Activated CD4-positive, alpha-beta T cell treated with anti-CD3 and anti-CD28 coated beads for 36 hours (primary cell): ENCODE measurements at regions of chr6 and their contacts with region 1.

Region 1: DNA sequence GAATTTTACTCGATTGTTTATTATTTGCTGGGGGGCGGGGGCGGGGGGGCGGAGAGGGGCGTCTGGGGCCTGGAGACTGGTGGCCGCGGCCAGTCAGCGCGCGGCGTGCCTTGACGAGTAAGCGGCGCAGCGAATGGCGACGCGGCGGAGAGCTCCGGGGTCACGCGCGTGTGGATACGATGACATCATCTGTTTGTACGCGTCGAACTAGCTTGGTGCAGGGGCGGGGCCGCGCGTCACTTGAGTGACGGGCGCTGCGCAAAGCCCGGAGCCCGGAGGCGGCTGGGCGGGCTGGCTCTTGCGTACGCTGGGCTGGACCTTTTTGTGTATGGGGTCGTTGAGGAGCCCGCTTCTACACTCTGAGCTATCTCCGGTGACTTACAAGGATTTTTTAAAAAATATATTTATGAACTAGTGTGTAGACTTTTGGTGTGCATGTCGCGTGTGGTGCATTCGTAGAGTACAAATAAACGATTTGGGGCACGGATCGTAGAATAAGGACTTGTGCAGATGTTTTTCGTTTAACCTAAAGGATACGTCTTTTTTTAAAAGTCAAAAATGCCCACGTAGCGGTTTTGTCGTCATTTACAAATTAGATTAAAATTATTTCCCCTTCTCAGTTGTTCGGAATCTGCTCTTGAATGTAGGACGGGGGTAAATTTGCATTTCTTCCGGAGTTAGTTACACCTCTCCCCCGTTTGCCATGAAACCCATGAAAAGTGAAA is 2.2 kb upstream of the FOXO3 start:
- DNase-seq: peak; percentile 98
- ATAC-seq: peak; percentile 71
- H3K4me3 Mint-ChIP-seq: peak overlapping the region; percentile 83
- H3K27ac Mint-ChIP-seq: peak overlapping the region; percentile 89
- H3K4me1 Mint-ChIP-seq: peaks cover 21% of the 10 kb centered on the region
- H3K27me3 Mint-ChIP-seq: peaks cover 14% of the 10 kb centered on the region

Region 2: DNA sequence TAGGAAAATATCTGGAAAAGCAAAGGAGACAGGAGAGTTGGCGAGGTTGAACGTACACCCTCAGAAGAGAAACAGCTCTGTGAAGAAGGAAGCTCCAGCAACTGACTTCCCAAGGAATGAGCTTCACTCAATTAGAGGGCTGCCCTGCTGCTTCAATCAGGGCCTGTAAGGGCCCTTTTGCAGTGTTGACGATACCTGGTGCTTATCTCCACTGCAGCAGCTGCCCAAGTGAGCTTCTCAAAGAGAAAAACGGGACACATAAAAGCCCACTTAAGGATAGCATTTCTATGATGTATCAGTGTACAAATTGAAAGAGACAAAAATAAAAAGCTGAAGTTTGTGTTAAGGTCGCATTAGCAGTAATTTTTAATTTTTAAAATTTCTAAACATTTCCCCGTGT is 616.9 kb before region 1 on chr6:
- CTCF ChIA-PET with region 1: no interaction called
- POLR2A ChIA-PET with region 1: no interaction called
- intact Hi-C with region 1: no loop called
- DNase-seq: no peak
- ATAC-seq: no peak
- H3K4me3 Mint-ChIP-seq: no peak overlapping the region
- H3K27ac Mint-ChIP-seq: no peak overlapping the region
- H3K4me1 Mint-ChIP-seq: peaks cover 37% of the 10 kb centered on the region
- H3K27me3 Mint-ChIP-seq: no peaks in the 10 kb centered on the region

Region 3: DNA sequence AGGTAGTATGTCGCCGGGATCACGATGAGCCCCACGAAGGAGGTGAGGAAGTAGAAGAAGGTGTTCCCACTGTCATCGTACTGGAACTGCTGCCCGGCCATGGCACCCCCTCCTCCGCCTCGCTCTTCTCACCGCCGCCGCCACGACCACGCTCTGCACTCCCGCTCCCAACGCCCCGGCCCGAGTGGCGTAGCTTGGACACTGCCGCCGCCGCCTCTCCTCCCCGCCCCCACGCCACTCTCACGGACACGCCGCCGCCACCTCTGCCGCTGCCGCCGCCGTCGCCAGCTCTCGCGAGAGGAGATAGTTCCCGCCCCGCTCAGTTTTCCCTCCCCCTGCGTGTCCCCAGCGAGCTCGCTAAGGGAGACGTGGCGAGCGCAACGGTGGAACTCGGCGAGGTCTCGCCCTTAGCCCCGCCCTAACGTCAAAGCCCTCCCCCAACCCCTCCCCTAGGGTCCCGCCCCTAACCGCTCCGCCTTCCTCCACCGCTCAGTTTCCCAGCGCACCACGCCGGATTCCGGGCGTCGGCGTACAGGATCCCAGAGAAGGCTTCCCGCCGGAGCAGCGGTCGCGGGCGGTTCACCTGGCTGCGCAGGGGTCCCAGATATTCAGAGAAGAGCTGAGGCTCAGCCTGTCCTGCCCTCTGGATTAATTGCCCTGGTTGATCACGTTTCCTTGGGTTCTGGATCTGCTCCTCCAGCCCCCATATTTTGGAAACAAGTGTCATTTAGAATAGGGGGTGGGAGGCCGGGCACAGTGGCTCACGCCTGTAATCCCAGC is 600.4 kb before region 1 on chr6 and contains the start of gene SEC63:
- CTCF ChIA-PET with region 1: no interaction called
- POLR2A ChIA-PET with region 1: no interaction called
- intact Hi-C with region 1: loop called in 1 of 2 experiments (anchors 1 kb)
- DNase-seq: peak; percentile 98
- ATAC-seq: peak; percentile 98
- H3K4me3 Mint-ChIP-seq: peak within 1 kb of the TSS; percentile 100
- H3K27ac Mint-ChIP-seq: peak within 1 kb of the TSS; percentile 99
- H3K4me1 Mint-ChIP-seq: peaks cover 36% of the 10 kb centered on the region
- H3K27me3 Mint-ChIP-seq: peaks cover 2% of the 10 kb centered on the region
- total RNA-seq, gene SEC63: 98.7 to 100 TPM

Region 4: GRCh38 chr6:108541838-108542759 is 16.4 kb before region 1 on chr6:
- CTCF ChIA-PET with region 1: interaction called, 16 read pairs
- POLR2A ChIA-PET with region 1: no interaction called
- intact Hi-C with region 1: no loop called
- DNase-seq: peak; percentile 81
- ATAC-seq: peak; percentile 79
- H3K4me3 Mint-ChIP-seq: no peak overlapping the region
- H3K27ac Mint-ChIP-seq: no peak overlapping the region
- H3K4me1 Mint-ChIP-seq: peaks cover 7% of the 10 kb centered on the region
- H3K27me3 Mint-ChIP-seq: no peaks in the 10 kb centered on the region

Region 5: GRCh38 chr6:108782179-108783041 is 223.9 kb after region 1 on chr6:
- CTCF ChIA-PET with region 1: no interaction called
- POLR2A ChIA-PET with region 1: no interaction called
- intact Hi-C with region 1: loop called (anchors 5 kb)
- DNase-seq: peak; percentile 91
- ATAC-seq: peak; percentile 99
- H3K4me3 Mint-ChIP-seq: peak overlapping the region; percentile 71
- H3K27ac Mint-ChIP-seq: no peak overlapping the region
- H3K4me1 Mint-ChIP-seq: peaks cover 10% of the 10 kb centered on the region
- H3K27me3 Mint-ChIP-seq: peaks cover 3% of the 10 kb centered on the region

Region 6: DNA sequence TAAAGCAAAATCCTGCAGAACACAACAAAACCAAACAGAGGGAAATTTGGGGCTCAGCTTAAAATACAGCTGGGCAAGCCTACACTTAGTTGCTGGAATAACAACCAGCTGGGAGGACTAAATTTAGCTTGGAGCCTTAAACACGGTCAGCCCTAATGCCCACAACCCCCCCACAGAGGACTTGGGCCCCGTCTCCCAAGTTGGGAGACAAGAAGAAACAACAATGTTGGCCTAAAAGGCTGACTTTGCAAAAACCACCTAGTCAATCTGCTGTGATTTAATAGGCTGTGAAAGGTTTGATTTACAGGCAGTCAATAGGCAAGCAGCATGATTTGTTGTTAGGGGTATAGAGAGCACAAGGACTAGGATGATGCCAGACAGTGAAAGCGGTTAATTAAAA is 249.4 kb after region 1 on chr6:
- CTCF ChIA-PET with region 1: no interaction called
- POLR2A ChIA-PET with region 1: no interaction called
- intact Hi-C with region 1: no loop called
- DNase-seq: no peak
- ATAC-seq: no peak
- H3K4me3 Mint-ChIP-seq: no peak overlapping the region
- H3K27ac Mint-ChIP-seq: no peak overlapping the region
- H3K4me1 Mint-ChIP-seq: no peaks in the 10 kb centered on the region
- H3K27me3 Mint-ChIP-seq: no peaks in the 10 kb centered on the region

Region 7: DNA sequence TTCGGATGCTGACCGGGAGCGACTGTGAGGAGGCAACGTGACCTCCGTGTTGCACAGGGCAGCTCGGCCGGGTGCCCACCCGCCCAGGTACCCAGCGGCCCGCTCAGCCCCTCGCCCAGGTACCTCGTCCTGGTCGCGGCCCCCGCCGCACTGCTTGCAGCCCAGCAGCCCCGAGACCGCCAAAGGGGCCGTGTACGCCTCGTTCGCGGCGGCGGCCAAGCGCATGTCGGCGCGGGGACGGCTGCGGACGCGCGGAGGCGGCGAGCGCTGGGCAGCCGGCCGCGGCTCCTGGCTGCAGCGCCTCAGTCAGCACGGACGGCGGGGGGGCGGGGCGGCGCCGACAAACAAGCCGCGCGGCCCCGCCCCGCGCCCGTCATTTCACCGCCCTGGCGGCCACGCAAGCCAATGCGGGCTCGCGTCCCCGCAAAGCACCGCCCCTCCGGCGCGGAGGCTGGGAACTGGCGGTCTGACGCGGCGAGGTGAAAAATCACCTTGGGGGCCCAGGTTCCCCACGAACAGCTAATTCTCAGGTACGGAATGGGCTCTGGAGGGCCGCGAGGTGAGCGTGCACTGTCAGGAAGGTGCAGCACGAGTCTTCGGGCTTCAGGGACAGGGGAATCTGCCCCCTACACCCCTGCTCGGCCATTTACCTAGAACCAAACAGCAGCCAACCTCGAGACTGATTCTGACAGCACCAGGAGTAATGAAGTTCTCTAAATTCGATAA is 450.9 kb after region 1 on chr6:
- CTCF ChIA-PET with region 1: interaction called, 3 read pairs
- POLR2A ChIA-PET with region 1: interaction called, 3 read pairs
- intact Hi-C with region 1: loop called (anchors 1 to 5 kb)
- DNase-seq: peak; percentile 95
- ATAC-seq: peak; percentile 89
- H3K4me3 Mint-ChIP-seq: peak overlapping the region; percentile 94
- H3K27ac Mint-ChIP-seq: peak overlapping the region; percentile 98
- H3K4me1 Mint-ChIP-seq: peaks cover 60% of the 10 kb centered on the region
- H3K27me3 Mint-ChIP-seq: no peaks in the 10 kb centered on the region

Region 8: GRCh38 chr6:109373762-109374161 is 815.2 kb after region 1 on chr6:
- CTCF ChIA-PET with region 1: no interaction called
- POLR2A ChIA-PET with region 1: interaction called, 3 read pairs
- intact Hi-C with region 1: loop called in 1 of 2 experiments (anchors 2 kb)
- DNase-seq: peak; percentile 77
- ATAC-seq: peak; percentile 95
- H3K4me3 Mint-ChIP-seq: peak overlapping the region; percentile 68
- H3K27ac Mint-ChIP-seq: peak overlapping the region; percentile 98
- H3K4me1 Mint-ChIP-seq: peaks cover 77% of the 10 kb centered on the region
- H3K27me3 Mint-ChIP-seq: no peaks in the 10 kb centered on the region